ENCODE measurements at regions of chr1 and their contacts with region 1.

Region 1: DNA sequence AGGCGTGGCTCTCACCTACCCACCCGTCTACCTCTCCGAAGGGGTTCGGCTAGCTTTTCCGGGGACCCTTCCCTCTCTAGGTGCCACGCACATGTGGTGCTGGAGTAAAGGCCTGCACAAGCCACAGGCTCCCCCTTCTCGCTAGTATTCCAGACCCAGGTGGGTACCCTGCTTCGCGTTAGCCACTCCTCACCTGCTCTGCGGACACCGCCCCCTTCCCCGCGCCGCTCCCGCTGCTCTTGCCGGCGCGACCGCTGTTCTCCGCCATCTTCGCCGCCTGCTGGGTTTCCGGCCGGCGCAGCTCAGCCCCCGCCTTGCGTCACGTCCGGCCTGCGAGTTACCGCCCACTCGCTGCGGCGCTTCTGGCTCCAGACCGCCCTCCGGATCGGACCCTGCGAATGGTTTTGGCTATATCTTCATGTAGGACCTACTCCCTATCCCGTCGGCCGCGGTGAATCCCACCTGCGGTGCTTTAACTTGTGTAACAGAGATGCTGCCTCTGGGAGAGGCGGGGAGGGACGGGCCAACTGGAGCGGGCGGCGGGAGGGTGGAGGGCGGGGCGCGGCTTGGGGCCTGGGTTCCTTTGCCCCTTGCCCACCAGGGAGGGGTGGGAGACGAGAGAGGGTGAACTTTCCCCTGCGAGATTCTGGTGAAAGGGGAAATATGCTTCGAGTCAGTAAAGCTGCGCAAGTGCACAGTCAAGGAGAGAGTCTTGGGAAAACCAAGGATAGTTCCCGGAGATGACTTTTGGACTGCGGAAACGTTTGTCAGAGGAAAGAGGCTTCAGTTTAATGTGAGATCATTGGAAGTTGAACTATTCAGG is at the starts of genes NIT1 and PFDN2:
- DNase-seq: peak; percentile 85
- H3K4me3 ChIP-seq: peak within 1 kb of the TSS; percentile 70 to 96 (median 81)
- H3K27ac ChIP-seq: peak within 1 kb of the TSS; percentile 98
- H3K4me1 ChIP-seq: peaks cover 38% of the 10 kb centered on the region
- H3K27me3 ChIP-seq: no peaks in the 10 kb centered on the region
- CTCF ChIP-seq: no peak
- total RNA-seq, gene NIT1: 31.3 to 51.1 TPM
- total RNA-seq, gene PFDN2: 34.2 to 141 TPM

Region 2: GRCh38 chr1:161021165-161021960 is 96.6 kb before region 1 on chr1:
- CTCF ChIA-PET with region 1: no interaction called
- dilution Hi-C with region 1: no loop called
- in situ Hi-C with region 1: no loop called
- intact Hi-C with region 1: loop called (anchors 1 kb)
- DNase-seq: peak; percentile 100
- H3K4me3 ChIP-seq: peak overlapping the region; percentile 74 to 81 (median 80)
- H3K27ac ChIP-seq: peak overlapping the region; percentile 98
- H3K4me1 ChIP-seq: peaks cover 34% of the 10 kb centered on the region
- H3K27me3 ChIP-seq: no peaks in the 10 kb centered on the region
- CTCF ChIP-seq: no peak

Region 3: GRCh38 chr1:161071886-161072371 is 46.0 kb before region 1 on chr1:
- CTCF ChIA-PET with region 1: no interaction called
- dilution Hi-C with region 1: no loop called
- in situ Hi-C with region 1: no loop called
- intact Hi-C with region 1: loop called (anchors 1 kb)
- DNase-seq: no peak
- H3K4me3 ChIP-seq: no peak overlapping the region
- H3K27ac ChIP-seq: no peak overlapping the region
- H3K4me1 ChIP-seq: peaks cover 45% of the 10 kb centered on the region
- H3K27me3 ChIP-seq: no peaks in the 10 kb centered on the region
- CTCF ChIP-seq: peak; percentile 64 to 71

Region 4: DNA sequence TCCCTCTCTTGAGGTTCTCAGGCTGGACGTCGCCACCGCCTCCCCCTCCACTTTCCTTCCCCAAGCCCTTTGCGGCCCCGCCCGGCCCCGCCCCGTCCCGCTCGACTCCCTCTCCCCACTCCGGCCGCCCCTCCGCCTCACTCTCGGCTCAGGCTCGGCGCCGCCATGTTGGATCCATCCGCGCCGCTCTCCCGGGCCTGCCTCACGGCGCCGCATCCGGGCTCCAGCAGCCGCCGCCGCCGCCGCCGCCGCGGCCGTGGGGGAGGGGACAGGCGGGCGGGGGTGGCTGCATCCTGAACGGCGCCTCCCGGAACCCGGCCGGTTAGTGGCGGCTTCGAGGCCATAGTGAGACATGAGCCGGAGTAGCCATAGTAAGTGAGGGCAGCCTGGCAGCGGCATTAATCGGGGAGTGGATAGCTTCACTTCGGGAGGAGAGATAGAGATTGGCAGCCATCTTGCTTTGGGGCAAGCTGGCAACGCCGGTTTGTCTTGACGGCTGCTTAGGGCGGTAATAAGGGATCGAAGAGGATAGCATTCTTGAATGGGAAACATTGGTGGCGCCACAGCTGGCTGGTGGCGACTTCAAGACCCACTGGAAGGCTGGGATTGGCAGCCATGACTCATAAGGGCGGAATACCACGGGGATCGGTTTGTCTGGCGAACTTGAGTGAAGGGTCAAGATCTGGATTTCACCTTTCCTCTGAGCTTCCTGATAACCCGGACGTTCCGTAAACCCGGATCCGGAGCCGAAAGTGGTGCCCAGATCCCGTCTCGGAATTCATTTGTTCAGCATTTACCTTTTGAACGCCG is 14.6 kb after region 1 on chr1 and contains the start of gene DEDD:
- CTCF ChIA-PET with region 1: no interaction called
- dilution Hi-C with region 1: no loop called
- in situ Hi-C with region 1: no loop called
- intact Hi-C with region 1: loop called (anchors 1 kb)
- DNase-seq: peak; percentile 97
- H3K4me3 ChIP-seq: peak within 1 kb of the TSS; percentile 57 to 88 (median 65)
- H3K27ac ChIP-seq: peak within 1 kb of the TSS; percentile 91
- H3K4me1 ChIP-seq: peaks cover 10% of the 10 kb centered on the region
- H3K27me3 ChIP-seq: no peaks in the 10 kb centered on the region
- CTCF ChIP-seq: peak in 1 of 2 donors; percentile 17
- total RNA-seq, gene DEDD: 40.0 to 42.3 TPM

Region 5: GRCh38 chr1:161153679-161154426 is 35.9 kb after region 1 on chr1 and contains the start of gene UFC1:
- CTCF ChIA-PET with region 1: no interaction called
- dilution Hi-C with region 1: no loop called
- in situ Hi-C with region 1: no loop called
- intact Hi-C with region 1: loop called (anchors 2 kb)
- DNase-seq: peak; percentile 90
- H3K4me3 ChIP-seq: peak within 1 kb of the TSS; percentile 74 to 80 (median 75)
- H3K27ac ChIP-seq: peak within 1 kb of the TSS; percentile 96
- H3K4me1 ChIP-seq: peaks cover 3% of the 10 kb centered on the region
- H3K27me3 ChIP-seq: no peaks in the 10 kb centered on the region
- CTCF ChIP-seq: peak in 1 of 2 donors; percentile 1
- total RNA-seq, gene UFC1: 49.2 to 59.3 TPM

Region 6: DNA sequence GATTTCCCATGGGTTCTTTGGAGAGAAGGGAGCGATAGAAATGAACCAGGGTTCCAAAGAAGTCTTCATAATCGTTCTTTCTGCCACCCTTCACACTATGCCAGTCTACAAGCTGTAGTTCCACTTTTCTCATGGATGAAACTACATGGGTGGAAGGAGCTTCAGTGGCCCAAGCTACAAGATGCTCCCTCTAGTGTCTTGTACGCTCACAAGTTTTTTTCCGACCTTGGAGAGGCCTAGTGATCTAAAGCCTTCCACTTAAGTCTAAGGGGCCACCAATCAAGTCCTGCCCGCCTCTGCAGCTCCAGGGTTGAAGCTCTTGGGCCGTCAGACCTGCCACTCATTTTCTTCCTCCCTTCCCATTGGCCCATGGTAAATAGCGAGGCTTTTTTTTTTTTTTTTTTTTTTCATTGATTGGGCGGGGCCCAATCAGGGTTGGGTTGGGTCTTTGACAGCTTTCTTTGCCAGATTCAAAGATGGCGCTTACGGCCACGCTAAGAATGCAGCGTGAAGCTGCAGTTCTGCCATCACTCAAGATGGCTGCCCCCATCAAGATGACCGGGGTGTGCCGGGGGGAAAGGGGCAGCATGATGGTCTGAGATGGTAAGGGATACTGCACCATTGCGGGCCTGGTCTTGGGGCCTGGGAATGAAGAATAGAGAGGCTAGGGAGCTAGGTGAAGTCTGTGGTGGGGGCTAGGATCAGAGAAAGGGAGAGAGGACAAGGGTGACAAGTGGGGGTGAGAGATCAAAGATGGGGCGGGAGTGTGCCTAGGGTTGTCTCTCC is 107.8 kb after region 1 on chr1 and contains the start of gene TOMM40L:
- CTCF ChIA-PET with region 1: no interaction called
- dilution Hi-C with region 1: no loop called
- in situ Hi-C with region 1: no loop called
- intact Hi-C with region 1: no loop called
- DNase-seq: peak; percentile 99
- H3K4me3 ChIP-seq: peak within 1 kb of the TSS; percentile 71 to 72 (median 71)
- H3K27ac ChIP-seq: peak within 1 kb of the TSS; percentile 40
- H3K4me1 ChIP-seq: peaks cover 14% of the 10 kb centered on the region
- H3K27me3 ChIP-seq: no peaks in the 10 kb centered on the region
- CTCF ChIP-seq: peak; percentile 58 to 70
- total RNA-seq, gene TOMM40L: 13.8 to 16.3 TPM